Sciatic nerve (tissue), 2 donors: ENCODE measurements at regions of chr11 and their contacts with region 1.

Region 1: DNA sequence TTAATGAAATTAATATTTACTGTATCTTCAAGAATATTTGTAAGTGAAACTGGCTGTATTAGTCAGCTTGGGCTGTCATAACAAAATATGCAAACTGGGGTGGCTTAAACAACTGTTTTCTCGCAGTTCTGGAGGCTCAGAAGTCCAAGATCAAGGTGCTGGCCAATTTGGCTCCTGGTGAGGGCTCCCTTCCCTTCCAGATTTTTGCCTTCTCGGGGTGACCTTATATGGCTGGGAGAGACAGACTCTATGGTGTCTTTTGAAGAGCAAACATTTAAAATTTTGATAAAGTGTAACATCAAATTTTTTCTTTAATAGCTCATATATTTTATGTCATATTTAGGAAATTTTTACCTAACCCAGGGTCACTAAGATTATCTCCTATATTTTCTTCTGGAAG is 30.2 kb downstream of the CSTPP1 start:
- DNase-seq: no peak
- ATAC-seq: no peak

Region 2: GRCh38 chr11:45993531-45994001 is 973.2 kb before region 1 on chr11:
- intact Hi-C with region 1: loop called (anchors 10 kb)
- DNase-seq: no peak
- ATAC-seq: peak; percentile 90

Region 3: GRCh38 chr11:46865340-46865739 is 101.4 kb before region 1 on chr11:
- intact Hi-C with region 1: no loop called
- DNase-seq: no peak
- ATAC-seq: no peak